B cell (primary cell): ENCODE measurements at regions of chr2 and their contacts with region 1.

Region 1: DNA sequence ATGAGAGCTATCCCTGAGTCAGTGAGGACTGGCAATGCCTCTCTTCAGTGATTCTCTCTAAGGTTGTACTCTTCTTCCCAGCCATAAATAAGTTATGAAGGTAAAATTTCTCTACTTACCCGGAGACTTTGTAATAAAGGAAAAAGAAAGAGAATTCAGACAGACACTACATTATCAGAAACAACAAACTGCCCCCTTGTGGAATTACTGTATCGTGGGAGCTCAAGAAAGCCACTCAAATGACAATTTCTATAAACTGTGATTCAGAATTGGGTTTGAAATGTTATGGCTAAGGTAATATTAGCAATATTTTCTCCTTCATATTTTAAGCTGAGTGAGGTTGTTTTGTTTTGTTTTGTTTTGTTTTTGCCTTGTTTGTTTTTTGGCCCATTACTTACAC is 155.8 kb upstream of the TANK start:
- DNase-seq: no peak
- ATAC-seq: no peak
- H3K4me3 ChIP-seq: no peak overlapping the region
- H3K4me3 Mint-ChIP-seq: no peak overlapping the region
- H3K27ac ChIP-seq: no peak overlapping the region
- H3K27ac Mint-ChIP-seq: no peak overlapping the region
- H3K4me1 ChIP-seq: no peaks in the 10 kb centered on the region
- H3K4me1 Mint-ChIP-seq: no peaks in the 10 kb centered on the region
- H3K27me3 ChIP-seq: peaks cover 0 to 3% (median 2%) of the 10 kb centered on the region in 4 experiments
- H3K27me3 Mint-ChIP-seq: peaks cover 26% of the 10 kb centered on the region
- CTCF ChIP-seq: no peak

Region 2: GRCh38 chr2:160994141-160995002 is 10.0 kb before region 1 on chr2:
- CTCF ChIA-PET with region 1: interaction called, 26 read pairs
- POLR2A ChIA-PET with region 1: no interaction called
- intact Hi-C with region 1: no loop called
- DNase-seq: peak; percentile 81
- ATAC-seq: peak; percentile 68
- H3K4me3 ChIP-seq: no peak overlapping the region
- H3K4me3 Mint-ChIP-seq: no peak overlapping the region
- H3K27ac ChIP-seq: no peak overlapping the region
- H3K27ac Mint-ChIP-seq: no peak overlapping the region
- H3K4me1 ChIP-seq: peaks cover 0 to 3% of the 10 kb centered on the region in 2 donors
- H3K4me1 Mint-ChIP-seq: peaks cover 2% of the 10 kb centered on the region
- H3K27me3 ChIP-seq: no peaks in the 10 kb centered on the region
- H3K27me3 Mint-ChIP-seq: no peaks in the 10 kb centered on the region
- CTCF ChIP-seq: peak; percentile 90

Region 3: DNA sequence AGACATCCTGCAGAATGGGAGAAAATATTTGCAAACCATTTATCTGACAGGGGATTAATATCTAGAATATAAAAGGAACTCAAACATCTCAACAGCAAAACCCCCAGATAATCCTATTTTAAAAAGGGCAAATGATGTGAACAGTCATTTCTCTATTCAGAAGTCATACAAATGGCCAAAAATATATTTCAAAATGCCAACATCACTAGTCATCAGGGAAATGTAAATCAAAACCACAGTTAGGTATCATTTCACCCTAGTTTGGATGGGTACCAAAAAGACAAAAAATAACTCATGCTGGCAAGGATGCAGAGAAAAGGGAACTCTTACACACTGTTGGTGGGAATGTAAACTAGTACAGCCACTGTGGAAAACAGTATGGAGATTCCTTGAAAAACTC is 481.7 kb after region 1 on chr2:
- CTCF ChIA-PET with region 1: no interaction called
- POLR2A ChIA-PET with region 1: no interaction called
- intact Hi-C with region 1: no loop called
- DNase-seq: no peak
- ATAC-seq: no peak
- H3K4me3 ChIP-seq: no peak overlapping the region
- H3K4me3 Mint-ChIP-seq: no peak overlapping the region
- H3K27ac ChIP-seq: no peak overlapping the region
- H3K27ac Mint-ChIP-seq: no peak overlapping the region
- H3K4me1 ChIP-seq: no peaks in the 10 kb centered on the region
- H3K4me1 Mint-ChIP-seq: no peaks in the 10 kb centered on the region
- H3K27me3 ChIP-seq: no peaks in the 10 kb centered on the region
- H3K27me3 Mint-ChIP-seq: no peaks in the 10 kb centered on the region
- CTCF ChIP-seq: no peak